ENCODE measurements at regions of chr14 and their contacts with region 1.

Region 1: DNA sequence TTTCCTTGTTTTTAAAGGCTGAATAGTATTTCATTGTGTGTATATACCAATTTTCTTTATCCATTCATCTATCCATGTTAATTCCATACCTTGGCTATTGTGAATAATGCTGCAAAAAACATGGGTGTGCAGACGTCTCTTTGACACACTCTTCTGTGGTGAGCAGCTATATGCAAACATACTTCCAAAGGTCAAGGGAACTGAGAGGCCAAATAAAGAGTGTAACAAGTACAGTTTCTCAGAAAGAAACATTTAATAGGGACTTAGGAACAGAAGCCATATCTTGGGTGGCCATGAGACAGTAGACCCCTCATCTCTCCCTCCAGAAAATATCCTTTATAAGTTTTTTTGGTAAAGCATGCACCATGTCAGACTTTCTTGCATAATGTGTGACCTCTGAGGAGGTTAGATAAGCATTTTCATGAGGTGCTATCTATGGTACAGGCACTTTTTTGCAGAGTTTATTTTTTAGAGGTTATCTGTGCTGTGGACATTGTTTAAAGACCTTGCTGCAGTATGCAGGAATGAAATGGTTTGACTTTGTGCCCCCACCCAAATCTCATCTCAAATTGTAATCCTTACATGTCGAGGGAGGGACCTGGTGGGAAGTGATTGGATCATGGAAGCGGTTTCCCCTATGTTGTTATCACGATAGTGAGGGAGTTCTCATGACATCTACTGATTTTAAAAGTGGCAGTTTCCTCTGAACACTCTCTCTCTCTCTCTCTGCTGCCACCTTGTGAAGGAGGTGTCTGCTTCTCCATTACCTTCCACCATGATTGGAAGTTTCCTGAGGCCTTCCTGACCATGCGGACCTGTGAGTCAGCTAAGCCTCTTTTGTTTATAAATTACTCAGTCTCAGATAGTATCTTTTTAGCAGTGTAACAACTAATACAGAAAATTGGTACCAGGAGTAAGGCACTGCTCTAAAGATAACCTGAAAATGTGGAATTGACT is 1202.3 kb downstream of the GALC start:
- DNase-seq: no peak
- ATAC-seq: no peak
- H3K4me3 Mint-ChIP-seq: no peak overlapping the region
- H3K27ac Mint-ChIP-seq: no peak overlapping the region
- H3K4me1 Mint-ChIP-seq: no peaks in the 10 kb centered on the region
- H3K27me3 Mint-ChIP-seq: no peaks in the 10 kb centered on the region

Region 2: GRCh38 chr14:86333491-86333890 is 457.2 kb before region 1 on chr14:
- CTCF ChIA-PET with region 1: no interaction called
- POLR2A ChIA-PET with region 1: no interaction called
- intact Hi-C with region 1: loop called in 1 of 2 experiments (anchors 5 kb)
- DNase-seq: no peak
- ATAC-seq: no peak
- H3K4me3 Mint-ChIP-seq: no peak overlapping the region
- H3K27ac Mint-ChIP-seq: no peak overlapping the region
- H3K4me1 Mint-ChIP-seq: no peaks in the 10 kb centered on the region
- H3K27me3 Mint-ChIP-seq: no peaks in the 10 kb centered on the region

Region 3: GRCh38 chr14:86596024-86596423 is 194.7 kb before region 1 on chr14:
- CTCF ChIA-PET with region 1: no interaction called
- POLR2A ChIA-PET with region 1: no interaction called
- intact Hi-C with region 1: no loop called
- DNase-seq: no peak
- ATAC-seq: no peak
- H3K4me3 Mint-ChIP-seq: no peak overlapping the region
- H3K27ac Mint-ChIP-seq: no peak overlapping the region
- H3K4me1 Mint-ChIP-seq: no peaks in the 10 kb centered on the region
- H3K27me3 Mint-ChIP-seq: no peaks in the 10 kb centered on the region

Region 4: GRCh38 chr14:87205811-87206210 is 415.1 kb after region 1 on chr14:
- CTCF ChIA-PET with region 1: no interaction called
- POLR2A ChIA-PET with region 1: no interaction called
- intact Hi-C with region 1: no loop called
- DNase-seq: no peak
- ATAC-seq: no peak
- H3K4me3 Mint-ChIP-seq: no peak overlapping the region
- H3K27ac Mint-ChIP-seq: no peak overlapping the region
- H3K4me1 Mint-ChIP-seq: no peaks in the 10 kb centered on the region
- H3K27me3 Mint-ChIP-seq: no peaks in the 10 kb centered on the region

Measured in activated CD4-positive, alpha-beta T cell treated with anti-CD3 and anti-CD28 coated beads for 36 hours (primary cell).